SK-N-SH (cell line): ENCODE measurements at regions of chr18 and their contacts with region 1.

Region 1: DNA sequence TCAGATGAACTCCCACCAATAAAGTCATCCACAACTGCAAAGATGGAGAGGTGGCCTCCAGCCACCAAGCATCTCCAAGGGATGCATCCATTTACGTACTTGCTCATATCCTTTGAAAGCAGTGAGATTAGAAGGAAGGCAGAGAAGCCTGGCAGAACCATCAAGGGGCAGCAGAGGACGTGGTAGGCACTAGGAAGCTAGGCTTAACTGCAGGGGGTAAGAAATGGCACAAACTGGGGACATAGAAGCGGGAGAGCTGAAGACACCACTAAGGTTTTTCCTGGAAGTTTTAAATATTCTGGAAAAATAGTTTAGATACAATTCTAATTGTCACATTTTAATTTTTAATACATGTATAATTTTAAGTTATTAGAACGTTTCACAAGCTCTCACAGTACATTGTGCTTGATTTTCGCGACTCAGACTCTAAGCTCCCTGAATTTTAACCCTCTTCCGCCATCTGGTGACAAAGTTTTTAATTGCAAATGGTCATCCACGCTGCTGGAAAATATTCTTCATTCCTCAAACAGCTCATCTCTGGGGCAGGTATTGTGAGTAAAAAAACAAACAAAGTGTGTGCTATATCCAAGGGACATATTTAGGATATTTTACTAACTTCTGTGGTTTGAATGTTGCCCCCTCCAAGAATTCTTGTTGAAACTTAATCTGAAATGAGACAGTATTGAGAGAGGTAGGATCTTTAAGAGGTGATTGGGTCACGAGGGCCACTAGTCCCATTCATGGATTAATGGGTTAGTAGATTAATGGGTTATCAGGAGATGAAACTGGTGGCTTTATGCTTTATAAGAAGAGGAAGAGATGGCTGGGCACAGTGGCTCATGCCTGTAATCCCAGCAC is 1.6 kb upstream of the PSTPIP2 start:
- DNase-seq: peak; percentile 57
- H3K4me3 ChIP-seq: no peak overlapping the region
- H3K27ac ChIP-seq: no peak overlapping the region
- H3K4me1 ChIP-seq: peaks cover 0 to 9% of the 10 kb centered on the region in 2 experiments; a peak in 1 of 4 replicates
- H3K27me3 ChIP-seq: no peaks in the 10 kb centered on the region
- CTCF ChIP-seq: peak; percentile 73
- EP300 ChIP-seq: no peak
- RAD21 ChIP-seq: peak; percentile 88

Region 2: DNA sequence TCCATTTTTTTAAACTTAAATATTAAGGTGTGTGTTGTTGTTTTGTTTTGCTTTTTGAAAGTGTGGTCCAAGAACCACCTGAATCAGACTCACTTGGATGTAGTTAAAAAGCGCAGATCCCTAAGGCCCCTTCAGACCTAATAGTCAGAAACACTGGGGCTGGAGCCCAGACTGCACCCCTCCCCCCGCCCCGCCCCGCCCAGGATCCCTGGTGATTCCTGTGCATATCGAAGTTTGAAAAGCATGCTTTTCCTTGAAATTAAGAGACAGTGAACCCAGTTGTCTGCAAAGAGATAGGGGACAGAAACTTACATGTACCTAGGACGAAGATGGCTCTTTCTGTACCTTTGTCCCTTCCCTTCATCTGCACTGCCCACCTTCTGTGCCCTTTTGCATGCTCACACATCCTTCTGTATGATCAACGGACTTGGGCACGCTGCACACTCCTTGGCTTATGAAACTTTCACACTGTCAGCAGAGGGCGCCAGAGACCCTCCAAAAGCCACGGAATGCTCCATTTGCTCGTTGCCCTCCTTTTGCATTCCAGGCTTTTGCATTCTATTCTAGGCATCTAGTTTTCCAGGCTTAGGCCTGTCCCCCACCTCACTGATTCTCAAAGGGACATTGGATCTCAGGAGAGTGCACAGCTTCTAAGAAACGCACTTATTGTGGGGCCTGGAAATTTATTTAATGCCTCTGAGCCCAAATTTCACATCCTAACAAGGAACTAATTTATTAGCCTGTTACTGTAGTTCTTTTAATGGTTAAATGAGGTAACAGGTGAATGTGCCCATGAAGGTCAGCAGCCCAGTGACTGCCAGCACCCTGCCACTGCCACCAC is 382.5 kb before region 1 on chr18:
- CTCF ChIA-PET with region 1: interaction called, 21 read pairs
- POLR2A ChIA-PET with region 1: no interaction called
- DNase-seq: peak; percentile 69
- H3K4me3 ChIP-seq: no peak overlapping the region; a peak in 1 of 4 replicates
- H3K27ac ChIP-seq: no peak overlapping the region
- H3K4me1 ChIP-seq: no peaks in the 10 kb centered on the region; a peak in 1 of 4 replicates
- H3K27me3 ChIP-seq: no peaks in the 10 kb centered on the region
- CTCF ChIP-seq: peak; percentile 90
- EP300 ChIP-seq: no peak
- RAD21 ChIP-seq: peak; percentile 96

Region 3: GRCh38 chr18:45974088-45974536 is 99.6 kb before region 1 on chr18:
- CTCF ChIA-PET with region 1: interaction called, 22 read pairs
- POLR2A ChIA-PET with region 1: no interaction called
- DNase-seq: peak; percentile 57
- H3K4me3 ChIP-seq: peak overlapping the region in 1 of 2 experiments; percentile 14; a peak in 2 of 4 replicates
- H3K27ac ChIP-seq: peak overlapping the region in 1 of 2 experiments; percentile 22; a peak in 1 of 4 replicates
- H3K4me1 ChIP-seq: no peaks in the 10 kb centered on the region
- H3K27me3 ChIP-seq: no peaks in the 10 kb centered on the region
- CTCF ChIP-seq: peak; percentile 91
- EP300 ChIP-seq: no peak
- RAD21 ChIP-seq: peak; percentile 94

Region 4: DNA sequence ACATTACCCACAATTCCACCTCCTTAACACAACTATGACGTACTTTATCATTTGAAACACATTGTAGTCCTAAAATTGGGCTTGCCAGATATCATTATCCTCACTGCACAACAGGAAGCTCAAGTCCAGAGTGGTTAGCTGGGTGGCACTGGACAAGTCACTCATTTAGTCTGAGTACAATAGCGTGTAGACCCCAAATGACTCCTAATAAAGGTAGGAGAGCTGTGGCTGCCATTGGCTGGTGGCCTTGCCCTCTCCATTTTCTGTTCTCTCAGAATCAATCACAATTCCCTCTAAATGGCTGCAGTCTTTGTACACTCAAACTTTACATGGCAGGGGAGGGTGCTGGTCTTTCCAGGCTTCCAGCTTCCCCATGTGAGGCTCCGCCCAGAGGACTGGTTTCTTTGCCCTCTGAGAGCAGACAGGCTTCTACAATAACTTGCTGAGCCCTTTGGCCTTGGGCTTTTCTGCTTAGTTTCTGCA is 13.3 kb before region 1 on chr18:
- CTCF ChIA-PET with region 1: interaction called, 17 read pairs
- POLR2A ChIA-PET with region 1: no interaction called
- DNase-seq: no peak
- H3K4me3 ChIP-seq: no peak overlapping the region
- H3K27ac ChIP-seq: no peak overlapping the region
- H3K4me1 ChIP-seq: no peaks in the 10 kb centered on the region; a peak in 1 of 4 replicates
- H3K27me3 ChIP-seq: no peaks in the 10 kb centered on the region
- CTCF ChIP-seq: no peak
- EP300 ChIP-seq: no peak
- RAD21 ChIP-seq: no peak